A673 (cell line): ENCODE measurements at regions of chr6 and their contacts with region 1.

Region 1: GRCh38 chr6:2738373-2738979 is 12.2 kb downstream of the MYLK4 start:
- DNase-seq: peak; percentile 88
- H3K4me3 ChIP-seq: no peak overlapping the region
- H3K27ac ChIP-seq: no peak overlapping the region
- H3K4me1 ChIP-seq: no peaks in the 10 kb centered on the region
- H3K27me3 ChIP-seq: no peaks in the 10 kb centered on the region
- CTCF ChIP-seq: peak; percentile 91

Region 2: GRCh38 chr6:2749969-2750600 is 11.6 kb after region 1 on chr6:
- CTCF ChIA-PET with region 1: interaction called, 16 read pairs
- POLR2A ChIA-PET with region 1: no interaction called
- intact Hi-C with region 1: no loop called
- DNase-seq: peak; percentile 78
- H3K4me3 ChIP-seq: no peak overlapping the region
- H3K27ac ChIP-seq: no peak overlapping the region
- H3K4me1 ChIP-seq: peaks cover 46% of the 10 kb centered on the region
- H3K27me3 ChIP-seq: no peaks in the 10 kb centered on the region
- CTCF ChIP-seq: peak; percentile 90

Region 3: DNA sequence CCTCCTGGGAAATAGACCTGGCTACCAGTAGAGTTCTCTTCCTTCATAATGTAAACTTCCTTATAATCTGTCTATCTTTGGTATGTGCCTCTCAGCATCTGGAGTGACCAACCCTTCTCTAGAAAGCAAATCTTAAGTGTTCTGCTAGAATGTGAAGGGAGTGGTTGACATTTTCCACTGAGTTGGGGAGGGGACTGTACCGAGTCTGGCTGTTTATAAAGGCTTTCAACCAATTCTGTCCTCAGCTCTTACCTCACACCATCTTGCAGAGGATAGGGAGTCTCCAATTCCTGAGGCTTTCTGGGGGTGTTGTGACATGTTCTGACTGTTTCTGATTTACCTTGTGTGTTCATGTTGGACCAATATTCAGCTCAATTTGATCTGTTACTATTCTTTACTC is 1300.9 kb after region 1 on chr6:
- CTCF ChIA-PET with region 1: no interaction called
- POLR2A ChIA-PET with region 1: no interaction called
- intact Hi-C with region 1: no loop called
- DNase-seq: no peak
- H3K4me3 ChIP-seq: no peak overlapping the region
- H3K27ac ChIP-seq: no peak overlapping the region
- H3K4me1 ChIP-seq: peaks cover 4% of the 10 kb centered on the region
- H3K27me3 ChIP-seq: no peaks in the 10 kb centered on the region
- CTCF ChIP-seq: no peak